ENCODE measurements at regions of chr17 and their contacts with region 1.

Region 1: DNA sequence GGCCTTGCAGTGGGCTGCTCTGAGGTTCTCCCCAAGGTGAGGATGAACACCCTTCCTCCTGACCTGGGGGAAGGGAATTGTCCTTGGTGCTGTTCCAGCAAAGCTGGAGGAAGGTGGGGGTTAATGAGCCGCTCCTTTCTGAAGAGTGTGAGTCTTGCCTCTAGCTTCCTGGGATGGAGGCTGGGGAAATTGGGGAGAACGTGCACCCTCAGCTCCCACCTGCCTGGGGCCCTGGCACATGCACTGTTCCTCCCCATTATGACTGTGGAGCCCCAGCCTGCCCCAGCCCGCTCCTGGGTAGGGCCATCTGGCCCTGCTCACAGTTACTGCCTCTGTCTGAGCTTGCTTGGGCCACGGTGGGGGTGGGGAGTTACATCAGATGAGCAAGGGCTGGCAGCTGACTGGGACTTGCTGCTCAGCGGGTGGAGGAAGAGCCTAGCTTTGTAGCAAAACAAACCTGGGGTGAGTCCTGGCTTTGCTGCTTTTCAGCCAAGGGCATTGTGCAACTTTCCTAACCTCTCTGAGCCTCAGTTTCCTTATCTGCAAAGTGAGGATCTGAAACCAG is 11.1 kb downstream of the TNS4 start:
- DNase-seq: peak; percentile 57 to 62
- H3K4me3 ChIP-seq: peak overlapping the region; percentile 42; the same call in 1 of the 2 replicates
- H3K27ac ChIP-seq: peak overlapping the region; percentile 88
- H3K4me1 ChIP-seq: peaks cover 89% of the 10 kb centered on the region
- H3K27me3 ChIP-seq: no peaks in the 10 kb centered on the region
- CTCF ChIP-seq: no peak

Region 2: DNA sequence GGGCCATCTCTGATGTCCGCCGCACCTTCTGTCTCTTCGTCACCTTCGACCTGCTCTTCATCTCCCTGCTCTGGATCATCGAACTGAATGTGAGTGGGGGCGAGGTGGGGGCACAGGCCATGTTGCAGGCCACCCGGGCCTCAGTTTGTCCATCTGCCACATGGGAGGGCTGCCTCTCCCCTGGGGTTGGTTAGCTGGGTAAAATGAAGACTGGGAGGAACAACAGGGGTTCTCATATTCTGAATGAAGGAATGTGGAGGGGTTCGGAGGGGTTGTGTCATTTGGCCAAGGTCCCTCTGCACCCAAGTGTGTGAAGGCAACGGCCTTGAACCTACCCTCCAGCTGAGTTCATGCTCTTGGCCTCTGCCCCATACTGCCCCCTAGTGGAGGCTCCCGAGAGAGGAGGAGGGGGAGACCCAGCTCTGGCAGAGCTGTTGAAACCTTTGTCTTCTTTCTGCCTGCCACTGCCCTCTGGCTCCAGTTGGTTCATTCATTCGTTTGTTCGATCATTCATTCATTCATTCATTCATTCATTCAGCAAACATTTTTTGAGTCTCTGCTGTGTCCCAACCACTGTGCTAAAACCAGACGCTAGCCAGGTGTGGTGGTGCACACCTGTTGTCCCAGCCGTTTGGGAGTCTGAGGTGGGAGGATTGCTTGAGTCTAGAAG is 836.6 kb before region 1 on chr17:
- CTCF ChIA-PET with region 1: no interaction called
- POLR2A ChIA-PET with region 1: no interaction called
- intact Hi-C with region 1: no loop called
- DNase-seq: peak in 1 of 2 experiments; percentile 43
- H3K4me3 ChIP-seq: no peak overlapping the region
- H3K27ac ChIP-seq: no peak overlapping the region
- H3K4me1 ChIP-seq: no peaks in the 10 kb centered on the region
- H3K27me3 ChIP-seq: no peaks in the 10 kb centered on the region
- CTCF ChIP-seq: peak; percentile 90

Region 3: DNA sequence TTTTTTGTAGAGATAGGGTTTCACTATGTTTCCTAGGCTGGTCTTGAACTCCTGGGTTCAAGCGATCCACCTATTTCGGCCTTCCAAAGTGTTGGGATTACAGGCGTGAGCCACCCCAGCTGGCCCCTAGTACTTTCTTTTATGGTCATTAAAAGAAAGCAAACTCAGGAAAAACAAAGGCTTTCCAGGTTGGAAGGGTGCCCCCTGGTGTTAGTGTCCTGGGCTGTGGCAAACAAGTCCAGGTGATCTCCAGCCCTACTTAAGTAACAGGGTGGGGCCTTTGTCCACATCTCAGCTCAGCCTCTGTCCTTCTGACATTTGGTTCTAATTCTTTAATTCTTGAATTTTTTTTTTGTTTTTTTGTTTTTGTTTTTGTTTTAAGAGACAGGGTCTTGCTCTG is 40.2 kb before region 1 on chr17:
- CTCF ChIA-PET with region 1: no interaction called
- POLR2A ChIA-PET with region 1: no interaction called
- intact Hi-C with region 1: no loop called
- DNase-seq: peak in 1 of 2 experiments; percentile 43
- H3K4me3 ChIP-seq: no peak overlapping the region
- H3K27ac ChIP-seq: no peak overlapping the region
- H3K4me1 ChIP-seq: peaks cover 51% of the 10 kb centered on the region
- H3K27me3 ChIP-seq: no peaks in the 10 kb centered on the region
- CTCF ChIP-seq: peak; percentile 75

Region 4: DNA sequence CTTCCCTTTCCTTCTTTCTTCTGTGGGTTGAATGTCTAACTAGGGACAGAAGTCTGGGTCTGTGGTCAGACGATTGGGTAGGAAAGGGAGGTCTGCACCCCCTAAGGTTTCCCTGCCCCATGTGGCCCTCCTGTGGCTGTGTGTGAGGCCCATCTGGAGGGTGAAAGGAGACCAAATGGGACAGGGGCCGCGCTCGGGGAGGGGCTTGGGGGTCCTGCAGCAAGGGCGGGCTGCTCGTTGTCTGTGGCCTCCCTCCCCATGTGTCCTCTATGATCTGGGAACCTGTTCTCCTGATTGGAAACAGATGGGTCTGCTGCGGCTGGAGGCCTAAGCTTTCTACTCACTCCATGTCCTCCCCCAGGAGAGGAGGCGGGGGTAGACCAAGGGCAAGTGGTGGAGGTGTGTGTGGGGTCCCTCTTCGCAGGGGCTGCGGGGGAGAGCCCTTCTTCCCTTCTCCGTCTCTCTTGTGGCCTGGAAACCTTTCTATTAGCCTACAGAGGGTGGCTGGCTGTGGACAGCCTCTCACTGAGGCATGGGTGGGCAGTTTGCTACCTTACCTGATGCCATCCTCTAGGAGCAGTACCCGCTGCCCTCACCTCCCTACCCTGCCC is 28.5 kb before region 1 on chr17:
- CTCF ChIA-PET with region 1: no interaction called
- POLR2A ChIA-PET with region 1: interaction called, 12 read pairs
- intact Hi-C with region 1: no loop called
- DNase-seq: no peak
- H3K4me3 ChIP-seq: no peak overlapping the region
- H3K27ac ChIP-seq: no peak overlapping the region
- H3K4me1 ChIP-seq: no peaks in the 10 kb centered on the region
- H3K27me3 ChIP-seq: no peaks in the 10 kb centered on the region
- CTCF ChIP-seq: no peak

Region 5: GRCh38 chr17:40475234-40475908 is 15.0 kb before region 1 on chr17:
- CTCF ChIA-PET with region 1: interaction called, 6 read pairs
- POLR2A ChIA-PET with region 1: interaction called, 19 read pairs
- intact Hi-C with region 1: no loop called
- DNase-seq: no peak
- H3K4me3 ChIP-seq: no peak overlapping the region
- H3K27ac ChIP-seq: no peak overlapping the region
- H3K4me1 ChIP-seq: peaks cover 8% of the 10 kb centered on the region
- H3K27me3 ChIP-seq: no peaks in the 10 kb centered on the region
- CTCF ChIP-seq: no peak

Region 6: DNA sequence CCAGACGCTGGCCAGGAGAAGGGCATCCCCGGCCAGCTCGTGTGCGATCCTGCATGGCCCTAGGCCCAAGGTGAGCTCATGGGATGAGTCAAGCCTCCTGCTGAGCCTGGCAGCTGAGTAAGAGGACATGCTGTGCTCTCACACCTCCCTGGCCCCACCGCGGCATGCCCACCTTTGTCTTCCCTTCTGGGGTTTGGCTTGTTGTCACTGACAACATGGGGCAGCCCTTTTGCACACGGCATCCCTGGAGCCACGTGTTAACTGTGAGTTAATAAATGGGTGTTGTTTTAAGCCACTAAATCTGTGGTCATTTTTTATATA is 19.9 kb after region 1 on chr17:
- CTCF ChIA-PET with region 1: interaction called, 3 read pairs
- POLR2A ChIA-PET with region 1: no interaction called
- intact Hi-C with region 1: loop called (anchors 2 kb)
- DNase-seq: peak; percentile 88 to 95
- H3K4me3 ChIP-seq: no peak overlapping the region
- H3K27ac ChIP-seq: no peak overlapping the region
- H3K4me1 ChIP-seq: peaks cover 75% of the 10 kb centered on the region
- H3K27me3 ChIP-seq: no peaks in the 10 kb centered on the region
- CTCF ChIP-seq: no peak

Region 7: GRCh38 chr17:40522250-40522952 is 32.0 kb after region 1 on chr17:
- CTCF ChIA-PET with region 1: interaction called, 3 read pairs
- POLR2A ChIA-PET with region 1: interaction called, 9 read pairs
- intact Hi-C with region 1: loop called (anchors 1 kb)
- DNase-seq: peak in 1 of 2 experiments; percentile 28
- H3K4me3 ChIP-seq: no peak overlapping the region
- H3K27ac ChIP-seq: peak overlapping the region; percentile 81
- H3K4me1 ChIP-seq: peaks cover 62% of the 10 kb centered on the region
- H3K27me3 ChIP-seq: no peaks in the 10 kb centered on the region
- CTCF ChIP-seq: no peak

Region 8: DNA sequence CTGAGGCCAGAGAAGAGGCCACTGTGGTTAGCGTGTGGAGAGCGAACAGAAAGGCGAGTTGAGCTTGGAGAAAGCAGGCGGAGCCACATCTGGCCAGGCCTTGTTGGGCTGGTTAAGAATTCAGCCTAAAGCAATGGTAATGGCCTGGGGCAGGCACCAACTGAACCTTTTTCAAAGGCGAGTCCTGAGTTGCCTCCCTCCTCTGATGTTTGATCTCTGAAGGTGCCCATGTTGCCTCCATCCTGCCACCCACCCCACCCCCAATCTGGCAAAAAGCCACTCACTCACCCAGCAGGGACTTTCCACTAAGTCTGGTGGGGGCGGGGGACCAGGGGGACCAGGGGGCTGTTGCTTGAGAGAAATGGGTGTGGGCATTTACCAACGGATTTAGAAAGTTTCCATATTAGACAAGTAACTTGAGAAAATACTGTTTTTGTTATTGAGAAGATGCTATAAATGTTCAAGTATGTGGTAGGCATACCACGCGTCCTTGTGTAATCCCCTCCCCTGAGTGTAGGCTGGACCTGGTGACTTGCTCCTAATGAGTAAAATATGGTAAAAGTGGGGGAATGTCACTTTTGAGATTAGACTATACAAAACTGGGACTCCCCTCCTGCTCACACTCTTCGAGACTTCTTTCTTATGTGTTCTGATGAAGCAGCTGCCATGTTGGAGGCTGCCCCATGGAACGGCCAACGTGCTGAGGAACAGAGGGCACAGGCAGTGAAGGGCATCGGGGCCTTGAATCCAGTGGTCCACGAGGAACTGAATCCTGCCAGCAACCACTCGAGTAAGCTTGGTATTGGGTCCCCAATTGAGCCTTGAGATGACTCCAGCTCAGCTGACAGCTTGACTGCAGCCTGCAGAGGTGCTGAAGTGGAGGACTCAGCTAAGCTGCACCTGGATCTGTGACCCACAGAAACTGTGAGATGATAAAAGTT is 41.0 kb after region 1 on chr17:
- CTCF ChIA-PET with region 1: interaction called, 8 read pairs
- POLR2A ChIA-PET with region 1: interaction called, 14 read pairs
- intact Hi-C with region 1: loop called (anchors 2 kb)
- DNase-seq: no peak
- H3K4me3 ChIP-seq: no peak overlapping the region
- H3K27ac ChIP-seq: no peak overlapping the region
- H3K4me1 ChIP-seq: peaks cover 35% of the 10 kb centered on the region
- H3K27me3 ChIP-seq: no peaks in the 10 kb centered on the region
- CTCF ChIP-seq: no peak

Measured in PC-9 (cell line).